Mammary epithelial cell (primary cell): ENCODE measurements at regions of chr2 and their contacts with region 1.

Region 1: GRCh38 chr2:238203094-238203972 is at the start of gene ILKAP:
- DNase-seq: peak; percentile 80
- H3K4me3 ChIP-seq: peak within 1 kb of the TSS; percentile 70 to 98 (median 83)
- H3K27ac ChIP-seq: peak within 1 kb of the TSS; percentile 69
- H3K4me1 ChIP-seq: peaks cover 13% of the 10 kb centered on the region
- H3K27me3 ChIP-seq: no peaks in the 10 kb centered on the region
- CTCF ChIP-seq: no peak
- total RNA-seq, gene ILKAP: 16.7 to 52.7 TPM

Region 2: DNA sequence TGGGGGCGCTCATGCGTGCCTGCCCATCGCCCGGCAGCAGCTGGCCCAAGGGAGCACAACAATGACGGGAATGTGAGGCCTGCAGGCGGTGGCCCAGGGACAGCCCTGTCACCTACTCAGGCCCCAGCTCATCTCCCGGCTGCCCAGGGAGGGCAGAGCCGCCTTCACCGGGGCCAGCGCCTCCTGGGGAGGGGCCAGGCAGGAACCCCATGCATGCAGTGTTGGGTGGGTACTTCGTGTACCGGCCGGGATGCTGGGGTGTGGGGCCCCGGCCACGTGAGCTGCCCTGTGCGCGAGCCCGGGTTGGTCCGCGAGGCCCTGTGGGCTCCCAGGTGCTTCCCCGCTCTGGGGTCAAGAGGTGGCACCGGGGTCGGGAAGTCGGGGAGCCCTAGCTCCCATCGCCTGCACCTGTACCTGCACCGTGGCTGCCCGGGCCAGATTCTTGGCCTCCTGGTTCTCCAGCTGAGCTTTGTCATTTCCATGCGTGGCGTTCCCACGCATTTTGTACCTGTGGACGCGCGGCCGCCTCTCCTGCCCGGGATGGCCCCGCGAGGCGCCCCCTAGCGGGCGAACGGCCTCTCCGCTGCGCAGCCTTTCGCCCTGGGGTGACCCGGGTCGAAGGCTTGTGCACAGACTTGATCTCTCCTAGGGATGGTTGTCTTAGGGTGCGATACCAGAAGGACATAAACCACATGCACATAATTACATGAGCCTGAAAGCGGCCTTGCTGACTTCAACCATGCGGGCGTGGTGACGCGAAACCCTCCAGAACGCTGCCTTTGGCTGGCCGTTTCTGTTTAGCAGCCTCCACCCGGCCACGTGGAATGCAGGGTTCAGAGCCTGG is 63.9 kb before region 1 on chr2:
- CTCF ChIA-PET with region 1: no interaction called
- dilution Hi-C with region 1: loop called (anchors 5 kb)
- in situ Hi-C with region 1: no loop called
- intact Hi-C with region 1: no loop called
- DNase-seq: no peak
- H3K4me3 ChIP-seq: no peak overlapping the region
- H3K27ac ChIP-seq: no peak overlapping the region
- H3K4me1 ChIP-seq: peaks cover 42% of the 10 kb centered on the region
- H3K27me3 ChIP-seq: no peaks in the 10 kb centered on the region
- CTCF ChIP-seq: no peak

Region 3: DNA sequence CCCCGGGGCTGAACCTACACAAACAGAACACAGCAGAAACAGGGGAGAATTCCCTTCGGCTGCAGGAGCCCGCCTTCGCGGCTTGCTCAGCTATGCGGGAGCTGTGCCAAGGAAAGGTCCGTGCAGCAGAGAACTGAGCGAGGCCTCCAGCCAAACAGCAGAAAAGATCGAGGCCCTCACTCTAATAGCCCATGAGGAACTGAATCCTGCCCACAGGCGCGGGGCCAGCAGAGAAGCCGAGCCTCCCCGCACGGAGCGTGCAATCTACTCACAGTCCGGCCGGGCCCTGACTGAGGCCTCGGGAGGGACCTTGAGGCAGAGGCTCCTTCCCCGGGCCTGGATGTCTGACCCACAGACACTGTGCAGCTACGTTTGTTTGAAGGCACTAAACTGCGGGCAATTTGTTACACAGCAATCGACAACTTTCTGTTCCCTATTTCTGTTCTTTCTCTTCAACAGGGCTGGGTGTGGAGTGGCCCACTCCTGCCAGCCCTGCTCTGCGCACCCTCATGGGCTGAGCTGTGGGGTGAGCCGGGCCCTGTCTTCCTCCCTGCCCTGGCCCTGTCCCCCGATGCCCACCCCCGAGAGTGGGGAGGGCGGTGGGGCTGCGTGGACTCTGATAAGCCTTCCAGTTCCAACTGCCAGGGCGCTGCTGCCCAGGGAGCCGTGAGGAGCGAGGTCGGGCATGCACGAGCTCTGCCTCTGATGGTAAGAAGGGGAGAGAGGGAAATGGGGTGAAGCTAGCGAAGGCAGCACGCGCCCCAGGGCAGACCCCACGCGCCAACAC is 22.8 kb after region 1 on chr2:
- CTCF ChIA-PET with region 1: no interaction called
- dilution Hi-C with region 1: no loop called
- in situ Hi-C with region 1: no loop called
- intact Hi-C with region 1: loop called (anchors 2 kb)
- DNase-seq: no peak
- H3K4me3 ChIP-seq: no peak overlapping the region
- H3K27ac ChIP-seq: no peak overlapping the region
- H3K4me1 ChIP-seq: peaks cover 6% of the 10 kb centered on the region
- H3K27me3 ChIP-seq: no peaks in the 10 kb centered on the region
- CTCF ChIP-seq: no peak

Region 4: DNA sequence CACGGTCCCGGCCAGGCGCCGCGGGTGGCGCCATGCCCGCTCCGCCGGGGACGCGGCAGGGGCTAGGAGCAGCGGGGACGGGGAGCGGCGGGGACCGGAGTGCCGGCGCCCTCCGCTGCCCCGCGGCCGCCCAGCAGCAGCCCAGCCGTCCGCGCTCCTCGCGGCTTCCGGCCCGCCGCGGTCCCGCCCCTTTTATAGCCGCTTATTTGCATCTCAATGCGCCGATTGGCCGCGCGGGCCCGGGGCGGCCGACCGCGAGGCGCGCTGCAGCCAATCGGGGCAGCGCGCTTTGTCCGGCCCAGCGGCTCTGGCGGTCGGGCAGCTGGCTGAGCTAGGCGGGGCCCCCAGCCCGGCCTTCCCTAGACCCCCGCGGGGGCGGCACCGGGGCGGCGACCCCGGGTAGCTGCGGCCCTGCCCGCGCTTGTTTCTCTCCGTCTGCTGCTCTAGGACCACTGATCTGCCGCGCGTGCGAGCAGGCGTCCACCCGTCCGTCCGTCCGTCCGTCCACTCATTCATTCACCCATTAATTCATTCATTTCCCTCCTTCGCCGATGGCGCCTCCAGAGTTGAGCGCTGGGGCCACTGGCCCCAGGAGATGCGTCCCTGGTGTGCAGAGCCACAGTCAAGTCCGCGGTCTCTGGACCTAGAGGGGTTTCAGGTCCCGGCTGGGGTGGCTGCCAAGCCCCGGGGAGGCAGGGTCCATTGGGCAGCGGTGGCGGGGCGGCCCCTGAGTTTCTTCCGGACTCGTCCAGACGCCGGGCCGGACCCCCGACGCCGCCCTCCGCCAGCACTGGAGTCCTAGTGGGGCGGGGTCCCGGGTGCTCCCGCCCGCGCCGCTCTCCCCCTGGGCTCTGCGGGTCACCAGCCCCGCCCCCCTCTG is 36.8 kb after region 1 on chr2 and contains the start of gene HES6:
- CTCF ChIA-PET with region 1: no interaction called
- dilution Hi-C with region 1: no loop called
- in situ Hi-C with region 1: no loop called
- intact Hi-C with region 1: loop called (anchors 5 kb)
- DNase-seq: peak; percentile 84
- H3K4me3 ChIP-seq: peak within 1 kb of the TSS in 2 of 3 experiments; percentile 59 to 73
- H3K27ac ChIP-seq: no peak within 1 kb of the TSS
- H3K4me1 ChIP-seq: peaks cover 9% of the 10 kb centered on the region
- H3K27me3 ChIP-seq: peaks cover 2% of the 10 kb centered on the region
- CTCF ChIP-seq: no peak
- total RNA-seq, gene HES6: 1.2 to 5.0 TPM